A673 (cell line): ENCODE measurements at regions of chr7 and their contacts with region 1.

Region 1: GRCh38 chr7:95690367-95690947 is 81.9 kb upstream of the DYNC1I1 start:
- DNase-seq: peak; percentile 70
- H3K4me3 ChIP-seq: no peak overlapping the region
- H3K27ac ChIP-seq: no peak overlapping the region
- H3K4me1 ChIP-seq: no peaks in the 10 kb centered on the region
- H3K27me3 ChIP-seq: no peaks in the 10 kb centered on the region
- CTCF ChIP-seq: peak; percentile 73

Region 2: GRCh38 chr7:95511716-95512260 is 178.7 kb before region 1 on chr7:
- CTCF ChIA-PET with region 1: interaction called, 35 read pairs
- POLR2A ChIA-PET with region 1: interaction called, 3 read pairs
- intact Hi-C with region 1: loop called (anchors 5 kb)
- DNase-seq: peak; percentile 87
- H3K4me3 ChIP-seq: no peak overlapping the region
- H3K27ac ChIP-seq: no peak overlapping the region
- H3K4me1 ChIP-seq: no peaks in the 10 kb centered on the region
- H3K27me3 ChIP-seq: peaks cover 11% of the 10 kb centered on the region
- CTCF ChIP-seq: peak; percentile 92

Region 3: GRCh38 chr7:95527033-95527775 is 163.3 kb before region 1 on chr7:
- CTCF ChIA-PET with region 1: interaction called, 11 read pairs
- POLR2A ChIA-PET with region 1: no interaction called
- intact Hi-C with region 1: loop called (anchors 1 kb)
- DNase-seq: peak; percentile 74
- H3K4me3 ChIP-seq: no peak overlapping the region
- H3K27ac ChIP-seq: no peak overlapping the region
- H3K4me1 ChIP-seq: no peaks in the 10 kb centered on the region
- H3K27me3 ChIP-seq: peaks cover 12% of the 10 kb centered on the region
- CTCF ChIP-seq: peak; percentile 88

Region 4: GRCh38 chr7:95545078-95545498 is 145.4 kb before region 1 on chr7:
- CTCF ChIA-PET with region 1: interaction called, 13 read pairs
- POLR2A ChIA-PET with region 1: no interaction called
- intact Hi-C with region 1: no loop called
- DNase-seq: peak; percentile 39
- H3K4me3 ChIP-seq: no peak overlapping the region
- H3K27ac ChIP-seq: no peak overlapping the region
- H3K4me1 ChIP-seq: peaks cover 5% of the 10 kb centered on the region
- H3K27me3 ChIP-seq: peaks cover 11% of the 10 kb centered on the region
- CTCF ChIP-seq: peak; percentile 61

Region 5: GRCh38 chr7:95560674-95561073 is 129.8 kb before region 1 on chr7:
- CTCF ChIA-PET with region 1: no interaction called
- POLR2A ChIA-PET with region 1: no interaction called
- intact Hi-C with region 1: no loop called
- DNase-seq: no peak
- H3K4me3 ChIP-seq: no peak overlapping the region
- H3K27ac ChIP-seq: no peak overlapping the region
- H3K4me1 ChIP-seq: no peaks in the 10 kb centered on the region
- H3K27me3 ChIP-seq: no peaks in the 10 kb centered on the region
- CTCF ChIP-seq: no peak